ENCODE measurements at regions of chr14 and their contacts with region 1.

Region 1: GRCh38 chr14:91996948-91997371 is 42.9 kb downstream of the TRIP11 start:
- DNase-seq: no peak
- ATAC-seq: peak; percentile 75
- H3K4me3 Mint-ChIP-seq: no peak overlapping the region
- H3K27ac Mint-ChIP-seq: no peak overlapping the region
- H3K4me1 Mint-ChIP-seq: peaks cover 39% of the 10 kb centered on the region
- H3K27me3 Mint-ChIP-seq: no peaks in the 10 kb centered on the region

Region 2: DNA sequence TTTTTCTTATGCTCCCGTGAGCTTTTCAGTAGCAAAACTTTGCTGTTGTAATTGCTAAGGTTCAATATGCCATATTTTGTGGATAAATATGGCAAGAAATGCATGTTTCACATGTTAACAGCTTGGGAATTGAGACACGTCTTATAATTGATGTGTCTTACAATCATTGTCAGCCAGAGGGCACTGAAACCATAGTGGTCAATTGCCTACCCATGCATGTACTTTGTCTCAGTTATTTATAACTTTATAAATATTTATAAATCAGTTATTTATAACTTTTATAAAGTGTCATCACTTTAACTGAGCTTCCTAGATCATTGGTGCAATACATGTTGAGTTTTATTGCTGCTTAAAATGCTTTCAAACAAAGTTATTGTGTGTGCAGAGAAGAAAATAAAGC is 347.0 kb before region 1 on chr14:
- CTCF ChIA-PET with region 1: interaction called, 16 read pairs
- POLR2A ChIA-PET with region 1: interaction called, 5 read pairs
- intact Hi-C with region 1: loop called (anchors 1 to 2 kb)
- DNase-seq: peak; percentile 42
- ATAC-seq: peak; percentile 51
- H3K4me3 Mint-ChIP-seq: no peak overlapping the region
- H3K27ac Mint-ChIP-seq: no peak overlapping the region
- H3K4me1 Mint-ChIP-seq: no peaks in the 10 kb centered on the region
- H3K27me3 Mint-ChIP-seq: no peaks in the 10 kb centered on the region

Region 3: GRCh38 chr14:91919814-91920213 is 77.1 kb before region 1 on chr14:
- CTCF ChIA-PET with region 1: no interaction called
- POLR2A ChIA-PET with region 1: no interaction called
- intact Hi-C with region 1: no loop called
- DNase-seq: no peak
- ATAC-seq: no peak
- H3K4me3 Mint-ChIP-seq: no peak overlapping the region
- H3K27ac Mint-ChIP-seq: no peak overlapping the region
- H3K4me1 Mint-ChIP-seq: no peaks in the 10 kb centered on the region
- H3K27me3 Mint-ChIP-seq: peaks cover 2% of the 10 kb centered on the region

Region 4: DNA sequence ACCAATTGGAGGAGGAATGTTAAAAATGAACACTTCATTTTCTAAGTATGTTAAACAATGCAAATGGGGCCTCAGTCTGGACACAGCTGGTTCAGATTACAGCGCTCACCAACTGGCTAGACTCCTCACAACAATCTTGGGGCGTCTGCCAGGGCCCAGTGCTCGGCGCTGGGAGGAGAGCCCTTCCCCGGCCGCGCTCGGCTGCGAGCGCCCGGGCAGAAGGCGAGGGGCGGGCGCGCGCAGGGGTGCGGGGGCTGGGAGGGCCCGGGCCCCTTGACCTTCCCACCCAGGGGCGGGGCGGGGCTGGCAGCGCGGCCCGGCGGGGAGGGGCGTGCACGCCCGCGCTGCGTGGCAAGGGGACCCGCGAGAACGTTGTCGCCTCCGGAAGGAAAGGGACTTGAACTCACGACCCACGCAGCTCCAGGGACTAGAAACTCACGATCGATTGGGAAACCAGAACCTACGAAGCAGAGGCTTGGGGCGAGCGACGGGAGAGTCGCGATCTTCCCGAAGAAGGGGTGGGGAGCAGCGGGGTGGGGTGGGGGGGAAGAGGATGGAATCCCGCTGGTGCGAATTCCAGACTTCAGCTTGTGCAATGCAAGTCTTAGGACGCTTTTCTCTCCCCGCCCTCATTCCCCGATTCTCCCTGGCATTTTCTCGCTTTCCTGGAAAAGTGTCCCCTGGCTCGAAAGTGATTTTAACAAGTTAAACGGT is 49.3 kb before region 1 on chr14 and contains the start of gene FBLN5:
- CTCF ChIA-PET with region 1: interaction called, 6 read pairs
- POLR2A ChIA-PET with region 1: no interaction called
- intact Hi-C with region 1: loop called (anchors 1 to 5 kb)
- DNase-seq: peak; percentile 54
- ATAC-seq: peak; percentile 69
- H3K4me3 Mint-ChIP-seq: peak within 1 kb of the TSS; percentile 70
- H3K27ac Mint-ChIP-seq: peak within 1 kb of the TSS; percentile 69
- H3K4me1 Mint-ChIP-seq: peaks cover 10% of the 10 kb centered on the region
- H3K27me3 Mint-ChIP-seq: peaks cover 29% of the 10 kb centered on the region
- total RNA-seq, gene FBLN5: 3.0 to 4.7 TPM

Region 5: GRCh38 chr14:91968280-91968679 is 28.7 kb before region 1 on chr14:
- CTCF ChIA-PET with region 1: interaction called, 11 read pairs
- POLR2A ChIA-PET with region 1: no interaction called
- intact Hi-C with region 1: no loop called
- DNase-seq: peak; percentile 68
- ATAC-seq: peak; percentile 77
- H3K4me3 Mint-ChIP-seq: no peak overlapping the region
- H3K27ac Mint-ChIP-seq: peak overlapping the region; percentile 62
- H3K4me1 Mint-ChIP-seq: peaks cover 29% of the 10 kb centered on the region
- H3K27me3 Mint-ChIP-seq: no peaks in the 10 kb centered on the region